AG04450 (cell line): ENCODE measurements at regions of chr12 and their contacts with region 1.

Region 1: DNA sequence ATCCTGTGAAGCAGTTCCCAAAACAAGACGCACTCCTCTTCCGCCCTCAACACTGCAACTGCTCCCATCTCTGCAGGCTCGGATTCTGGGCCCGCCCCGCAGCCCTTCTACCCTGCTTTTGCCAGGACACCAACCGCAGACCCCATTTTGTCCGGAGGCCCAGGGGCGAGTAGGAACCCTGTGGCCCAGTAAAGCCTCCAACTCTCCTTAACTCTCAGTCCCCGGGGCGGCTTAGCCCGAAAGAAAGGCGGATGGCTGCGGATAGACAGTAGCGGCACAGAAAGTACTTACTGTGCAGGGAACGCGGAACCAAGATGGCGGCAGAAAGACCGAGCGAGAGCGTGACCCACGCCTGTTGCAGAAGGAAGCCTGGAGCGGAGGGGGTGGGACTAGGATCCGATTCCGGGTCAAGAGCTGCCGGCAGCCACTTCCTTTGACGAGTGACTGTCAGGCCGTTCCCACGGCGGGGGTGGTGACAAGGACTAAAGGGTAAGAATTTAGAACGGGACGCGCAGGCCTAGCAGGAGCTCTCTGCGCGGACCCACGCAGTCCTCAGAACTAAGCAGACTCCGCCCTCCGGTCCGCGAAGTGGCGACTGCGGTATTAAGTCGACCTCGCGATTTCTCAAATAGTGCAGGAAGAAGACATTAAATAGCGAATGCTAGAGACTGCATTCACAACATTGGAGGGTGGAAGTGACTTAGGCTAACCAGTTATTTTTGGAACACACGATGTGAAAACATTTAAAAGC is at the start of gene NACA:
- DNase-seq: peak; percentile 95
- H3K4me3 ChIP-seq: peak within 1 kb of the TSS; percentile 99
- H3K27ac ChIP-seq: peak within 1 kb of the TSS; percentile 91
- H3K27me3 ChIP-seq: no peaks in the 10 kb centered on the region
- CTCF ChIP-seq: no peak
- polyA plus RNA-seq, gene NACA: 596 and 723 TPM in 2 replicates

Region 2: GRCh38 chr12:56688129-56688845 is 36.9 kb before region 1 on chr12 and contains the start of gene PTGES3:
- CTCF ChIA-PET with region 1: interaction called, 10 read pairs
- POLR2A ChIA-PET with region 1: interaction called, 17 read pairs
- DNase-seq: peak; percentile 93
- H3K4me3 ChIP-seq: peak within 1 kb of the TSS; percentile 97
- H3K27ac ChIP-seq: peak within 1 kb of the TSS; percentile 99
- H3K27me3 ChIP-seq: no peaks in the 10 kb centered on the region
- CTCF ChIP-seq: no peak
- polyA plus RNA-seq, gene PTGES3: 80.1 and 112 TPM in 2 replicates

Region 3: GRCh38 chr12:56709759-56710376 is 15.3 kb before region 1 on chr12:
- CTCF ChIA-PET with region 1: interaction called, 5 read pairs
- POLR2A ChIA-PET with region 1: interaction called, 10 read pairs
- DNase-seq: no peak
- H3K4me3 ChIP-seq: no peak overlapping the region
- H3K27ac ChIP-seq: no peak overlapping the region
- H3K27me3 ChIP-seq: no peaks in the 10 kb centered on the region
- CTCF ChIP-seq: no peak

Region 4: DNA sequence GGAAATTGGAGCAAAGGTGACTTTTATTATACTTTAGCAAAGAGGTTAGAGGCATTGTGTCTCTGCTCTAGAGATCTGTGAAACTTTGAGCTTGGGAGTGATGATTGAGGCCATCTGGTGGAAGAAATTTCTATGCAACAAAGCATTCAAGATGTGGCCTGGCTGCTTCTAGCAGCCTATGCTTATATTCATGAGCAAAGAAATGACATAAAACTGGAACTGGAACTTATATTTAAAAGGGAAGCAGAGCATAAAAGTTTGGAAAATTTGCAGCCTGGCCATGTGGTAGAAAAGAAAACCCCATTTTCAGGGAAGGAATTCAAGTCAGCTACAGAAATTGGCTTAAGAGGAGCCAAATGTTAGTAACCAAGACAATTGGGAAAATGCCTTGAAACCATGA is 138.6 kb after region 1 on chr12:
- CTCF ChIA-PET with region 1: no interaction called
- POLR2A ChIA-PET with region 1: no interaction called
- DNase-seq: no peak
- H3K4me3 ChIP-seq: no peak overlapping the region
- H3K27ac ChIP-seq: no peak overlapping the region
- H3K27me3 ChIP-seq: no peaks in the 10 kb centered on the region
- CTCF ChIP-seq: no peak